AG04449 (cell line): ENCODE measurements at regions of chr11 and their contacts with region 1.

Region 1: GRCh38 chr11:61639816-61640443 is 40.3 kb upstream of the DAGLA start:
- DNase-seq: no peak
- H3K4me3 ChIP-seq: no peak overlapping the region
- CTCF ChIP-seq: no peak

Region 2: DNA sequence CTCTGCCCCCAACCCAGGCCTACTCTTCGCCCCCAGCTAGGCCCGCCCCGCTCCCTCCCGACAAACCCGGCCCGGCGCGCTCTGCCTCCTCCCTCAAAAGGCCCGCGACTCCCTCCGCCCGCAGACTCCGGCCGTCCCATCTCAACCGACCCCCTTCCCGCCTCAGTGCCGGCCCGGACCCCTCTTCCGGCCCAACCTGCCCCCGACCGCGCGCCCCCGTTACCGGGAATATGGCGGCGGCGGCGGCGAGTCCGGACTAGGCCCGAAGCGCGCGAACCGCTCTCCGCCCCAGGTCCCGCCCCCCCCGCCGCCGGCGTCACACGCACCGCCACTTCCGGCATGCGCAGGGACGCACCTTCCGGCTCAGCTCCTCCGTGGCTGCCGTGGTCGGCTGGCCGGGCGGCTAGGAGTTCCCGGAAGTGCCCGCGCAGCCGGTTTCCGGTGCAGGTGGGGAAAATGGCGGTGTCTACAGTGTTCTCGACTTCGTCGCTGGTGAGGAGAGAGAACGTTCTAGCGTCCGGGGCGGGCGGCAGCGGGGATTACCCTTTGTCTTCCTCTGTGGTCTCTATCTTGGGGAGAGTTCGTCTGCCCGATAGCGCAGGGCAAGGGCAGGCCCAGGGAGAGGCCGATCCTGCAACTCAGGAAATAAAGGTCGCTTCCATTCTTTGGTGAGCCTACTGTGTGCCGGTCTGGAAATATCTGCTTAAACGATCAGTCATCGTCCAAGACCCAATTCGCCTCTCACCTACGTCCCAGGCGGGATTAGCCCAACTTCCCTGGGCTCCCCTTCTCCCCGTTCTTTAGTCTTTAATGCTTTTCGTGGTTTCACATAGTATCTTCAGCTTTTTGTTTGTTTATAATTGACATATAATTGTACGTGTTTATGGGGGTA is 210.0 kb before region 1 on chr11 and contains the starts of genes CPSF7 and SDHAF2:
- CTCF ChIA-PET with region 1: interaction called, 25 read pairs
- POLR2A ChIA-PET with region 1: no interaction called
- DNase-seq: peak; percentile 63
- H3K4me3 ChIP-seq: peak within 1 kb of the TSS; percentile 99
- CTCF ChIP-seq: no peak

Region 3: GRCh38 chr11:61460474-61460881 is 179.5 kb before region 1 on chr11:
- CTCF ChIA-PET with region 1: interaction called, 14 read pairs
- POLR2A ChIA-PET with region 1: no interaction called
- DNase-seq: no peak
- H3K4me3 ChIP-seq: no peak overlapping the region
- CTCF ChIP-seq: no peak

Region 4: DNA sequence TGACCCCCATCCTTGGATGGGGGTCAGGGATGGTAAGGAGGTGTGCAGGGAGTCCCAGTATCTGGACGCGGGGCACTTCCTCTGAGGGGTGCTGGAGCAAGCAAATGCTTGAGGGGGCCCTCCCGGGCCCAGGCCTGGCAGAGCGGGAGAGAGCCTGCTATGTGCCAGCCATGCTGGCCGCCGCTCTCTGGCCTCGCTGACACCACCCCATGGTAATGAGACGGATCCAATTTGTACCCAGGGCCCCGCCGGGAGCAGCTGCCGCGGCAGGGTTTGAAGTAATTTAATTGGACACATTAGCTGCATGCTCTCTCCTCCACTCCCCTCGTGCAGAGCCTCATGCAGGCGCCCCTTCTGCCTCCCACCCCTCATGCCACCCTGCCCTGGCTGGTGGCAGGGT is 65.3 kb before region 1 on chr11:
- CTCF ChIA-PET with region 1: no interaction called
- POLR2A ChIA-PET with region 1: no interaction called
- DNase-seq: no peak
- H3K4me3 ChIP-seq: no peak overlapping the region
- CTCF ChIP-seq: no peak

Region 5: DNA sequence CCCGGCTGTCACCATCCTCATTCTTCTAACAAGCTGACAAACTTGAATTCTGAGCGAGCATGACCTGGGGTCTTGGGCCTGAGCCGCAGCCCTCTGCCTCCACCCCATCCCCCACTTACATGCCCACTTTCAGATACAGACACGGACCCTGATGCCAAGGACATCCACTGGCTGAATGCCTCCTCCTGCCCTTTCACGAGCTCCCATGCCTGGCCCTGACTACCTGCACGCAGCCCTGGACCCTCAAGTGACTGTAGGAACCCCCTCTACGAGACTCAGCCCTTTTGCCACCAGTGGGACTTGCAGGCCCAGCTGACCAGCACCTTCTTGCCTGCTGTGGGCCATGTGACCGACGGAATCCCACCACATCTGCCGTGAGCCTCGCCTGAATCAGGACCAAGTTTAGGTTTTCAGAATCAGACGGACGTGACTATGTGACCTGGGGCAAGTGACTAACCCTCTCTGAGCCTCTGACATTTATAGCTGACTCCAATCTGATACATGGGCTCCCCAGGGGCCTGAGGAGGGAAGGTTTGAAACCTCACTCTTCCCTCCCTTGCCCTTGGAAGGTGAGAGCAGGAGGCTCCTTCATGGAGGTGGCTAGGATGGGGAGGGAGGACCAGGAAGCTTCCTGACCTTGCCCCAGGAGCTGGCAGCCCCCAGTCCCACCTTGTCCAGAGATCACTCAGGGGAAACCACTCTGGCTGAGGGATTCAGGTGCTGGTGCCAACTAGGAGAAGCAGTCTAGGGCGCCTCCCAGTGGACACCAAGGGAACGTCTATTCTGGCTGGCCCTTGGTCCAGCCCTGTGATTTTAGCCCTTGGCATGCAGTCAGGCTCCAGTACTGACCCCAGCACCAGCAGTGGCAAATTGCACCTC is 12.1 kb before region 1 on chr11:
- CTCF ChIA-PET with region 1: interaction called, 59 read pairs
- POLR2A ChIA-PET with region 1: no interaction called
- DNase-seq: no peak
- H3K4me3 ChIP-seq: no peak overlapping the region
- CTCF ChIP-seq: peak; percentile 84

Region 6: DNA sequence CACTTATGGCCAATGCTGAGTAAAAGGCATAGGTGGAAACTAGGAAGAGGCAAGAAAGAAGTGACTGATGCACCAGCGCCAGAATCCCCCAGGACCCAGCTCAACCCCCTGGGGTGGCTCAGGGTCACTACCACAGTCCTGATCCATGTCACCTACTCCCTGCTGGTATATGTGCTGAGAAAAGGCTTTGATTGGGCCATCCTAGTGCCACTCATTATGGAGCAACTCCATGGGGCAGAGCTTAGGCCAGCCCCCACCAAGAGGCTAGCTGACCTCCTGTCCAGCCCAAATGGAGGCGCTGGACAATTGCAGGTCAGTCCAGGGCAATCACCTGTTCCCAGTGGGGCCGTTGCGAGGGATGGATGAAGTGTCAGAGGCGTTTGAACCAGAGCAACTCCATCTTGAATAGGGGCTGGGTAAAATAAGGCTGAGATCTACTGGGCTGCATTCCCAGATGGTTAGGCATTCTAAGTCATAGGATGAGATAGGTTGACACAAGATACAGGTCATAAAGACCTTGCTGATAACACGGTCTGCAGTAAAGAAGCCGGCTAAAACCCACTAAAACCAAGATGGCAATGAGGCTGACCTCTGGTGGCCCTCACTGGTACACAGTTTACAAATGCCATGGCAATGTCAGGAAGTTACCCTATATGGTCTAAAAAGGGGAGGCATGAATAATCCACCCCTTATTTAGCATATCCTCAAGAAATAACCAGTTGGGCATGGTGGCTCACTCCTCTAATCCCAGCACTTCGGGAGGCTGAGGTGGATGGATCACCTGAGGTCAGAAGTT is 19.7 kb after region 1 on chr11:
- CTCF ChIA-PET with region 1: interaction called, 99 read pairs
- POLR2A ChIA-PET with region 1: no interaction called
- DNase-seq: no peak
- H3K4me3 ChIP-seq: no peak overlapping the region
- CTCF ChIP-seq: no peak

Region 7: DNA sequence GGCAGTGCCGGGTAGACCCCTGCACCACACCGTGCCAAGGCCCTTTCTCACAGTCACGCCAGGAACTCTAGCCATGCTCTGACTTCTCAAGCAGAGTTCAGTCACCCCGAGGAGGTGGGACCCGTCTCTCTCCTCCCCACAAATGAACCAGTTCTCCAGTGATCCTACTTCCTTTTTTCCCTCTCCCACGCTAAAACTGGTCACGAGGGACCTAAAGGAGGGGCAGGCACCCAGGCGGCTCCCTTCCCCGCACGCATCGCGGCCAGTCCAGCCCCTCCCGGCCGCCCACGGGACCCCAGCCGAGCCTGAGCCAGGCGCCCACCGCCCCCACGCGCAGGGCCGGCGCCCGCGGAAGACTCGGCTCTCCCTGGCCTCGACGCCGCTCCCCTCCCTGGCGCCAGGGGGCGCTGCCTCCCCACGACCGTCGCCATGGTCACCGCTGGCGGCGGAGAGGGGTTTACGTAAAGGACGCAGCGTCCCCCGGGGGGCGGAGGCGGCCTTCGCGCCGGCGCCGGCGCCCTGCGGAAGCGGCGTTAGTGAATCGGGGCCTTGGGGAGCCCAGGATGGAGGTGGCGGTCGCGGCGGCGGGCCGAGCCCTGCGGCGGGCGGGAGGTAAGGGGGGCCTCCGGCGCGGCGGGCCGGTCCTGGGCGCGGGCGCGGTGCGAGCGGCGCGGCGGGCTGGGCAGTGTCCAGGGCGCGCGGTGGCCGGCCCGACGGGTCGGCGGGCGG is 40.1 kb after region 1 on chr11 and contains the start of gene DAGLA:
- CTCF ChIA-PET with region 1: interaction called, 11 read pairs
- POLR2A ChIA-PET with region 1: no interaction called
- DNase-seq: no peak
- H3K4me3 ChIP-seq: peak within 1 kb of the TSS; percentile 68
- CTCF ChIP-seq: peak; percentile 96